Posterior vena cava (tissue), 2 donors: ENCODE measurements at regions of chr5 and their contacts with region 1.

Region 1: DNA sequence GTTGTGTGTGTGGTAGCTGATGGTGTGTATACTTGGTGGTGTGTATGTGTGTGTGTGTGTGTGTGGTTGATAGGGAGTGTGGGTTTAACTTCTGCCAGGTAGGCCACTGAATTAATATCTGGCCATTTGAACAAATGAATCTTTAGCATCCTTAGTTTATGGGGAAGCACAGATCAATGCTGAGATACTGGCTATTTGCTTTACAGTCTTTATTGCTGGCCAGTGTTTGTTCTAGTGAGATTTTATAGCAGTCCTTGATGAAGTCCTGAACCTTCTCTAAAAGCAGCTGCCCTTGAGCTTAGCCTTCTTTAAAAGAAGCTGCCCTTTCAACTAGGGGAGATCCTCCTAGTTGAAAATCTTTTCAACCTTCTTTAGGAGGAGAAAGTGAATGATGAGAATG is 69.3 kb downstream of the MACIR start:
- DNase-seq: no peak

Region 2: GRCh38 chr5:103973669-103974068 is 645.8 kb after region 1 on chr5:
- intact Hi-C with region 1: loop called in 1 of 2 experiments (anchors 5 kb)
- DNase-seq: no peak